A549 (cell line): ENCODE measurements at regions of chr11 and their contacts with region 1.

Region 1: DNA sequence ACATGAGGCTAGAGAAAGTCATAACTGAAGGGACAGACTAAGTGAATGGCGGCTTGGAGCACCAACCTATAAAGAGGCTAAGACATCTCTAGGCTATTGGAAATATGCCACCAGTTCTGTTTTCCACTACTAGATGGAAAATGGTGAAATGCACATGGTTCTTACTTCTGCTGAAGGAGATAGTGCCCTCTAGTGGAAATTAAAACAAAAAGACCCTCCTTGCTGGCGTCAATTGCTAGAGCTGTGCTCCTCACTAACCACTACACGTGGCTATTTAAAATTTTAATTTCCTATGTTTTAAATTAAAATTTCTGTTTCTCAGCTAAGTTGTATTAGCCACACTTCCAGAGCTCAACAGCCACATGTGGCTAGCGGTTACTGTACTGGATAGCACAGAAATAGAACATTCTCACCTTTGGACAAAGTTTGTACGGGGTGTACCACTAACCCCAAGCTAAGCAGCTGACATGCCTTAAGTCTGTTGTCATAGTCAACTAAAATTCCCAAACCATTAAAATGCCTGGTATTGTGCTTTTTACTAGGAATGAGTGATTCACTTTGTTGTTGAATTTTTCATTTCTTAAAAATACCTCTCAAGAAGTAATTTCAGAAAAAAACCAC is 34.1 kb upstream of the CALCA start:
- DNase-seq: peak in 1 of 2 experiments; percentile 56
- ATAC-seq: peak; percentile 70 to 80; a peak in 4 of 6 replicates
- H3K4me3 ChIP-seq: no peak overlapping the region
- H3K27ac ChIP-seq: no peak overlapping the region
- H3K4me1 ChIP-seq: no peaks in the 10 kb centered on the region
- CTCF ChIP-seq: peak; percentile 52
- EP300 ChIP-seq: no peak
- POLR2A ChIP-seq: no peak
- RAD21 ChIP-seq: peak; percentile 32 to 53; a peak in 3 of 5 replicates

Region 2: GRCh38 chr11:14974515-14975251 is 31.6 kb before region 1 on chr11:
- CTCF ChIA-PET with region 1: interaction called, 19 read pairs
- POLR2A ChIA-PET with region 1: no interaction called
- DNase-seq: peak; percentile 49 to 64
- ATAC-seq: peak; percentile 73 to 87
- H3K4me3 ChIP-seq: peak overlapping the region; percentile 29; the same call in 2 of the 3 replicates
- H3K27ac ChIP-seq: no peak overlapping the region
- H3K4me1 ChIP-seq: 0 out of 3 replicates have a peak, but pooled peaks cover 7% of the 10 kb centered on the region
- CTCF ChIP-seq: peak; percentile 59
- EP300 ChIP-seq: no peak
- POLR2A ChIP-seq: no peak
- RAD21 ChIP-seq: peak; percentile 34 to 38; a peak in 3 of 5 replicates